ENCODE measurements at regions of chr4 and their contacts with region 1.

Region 1: DNA sequence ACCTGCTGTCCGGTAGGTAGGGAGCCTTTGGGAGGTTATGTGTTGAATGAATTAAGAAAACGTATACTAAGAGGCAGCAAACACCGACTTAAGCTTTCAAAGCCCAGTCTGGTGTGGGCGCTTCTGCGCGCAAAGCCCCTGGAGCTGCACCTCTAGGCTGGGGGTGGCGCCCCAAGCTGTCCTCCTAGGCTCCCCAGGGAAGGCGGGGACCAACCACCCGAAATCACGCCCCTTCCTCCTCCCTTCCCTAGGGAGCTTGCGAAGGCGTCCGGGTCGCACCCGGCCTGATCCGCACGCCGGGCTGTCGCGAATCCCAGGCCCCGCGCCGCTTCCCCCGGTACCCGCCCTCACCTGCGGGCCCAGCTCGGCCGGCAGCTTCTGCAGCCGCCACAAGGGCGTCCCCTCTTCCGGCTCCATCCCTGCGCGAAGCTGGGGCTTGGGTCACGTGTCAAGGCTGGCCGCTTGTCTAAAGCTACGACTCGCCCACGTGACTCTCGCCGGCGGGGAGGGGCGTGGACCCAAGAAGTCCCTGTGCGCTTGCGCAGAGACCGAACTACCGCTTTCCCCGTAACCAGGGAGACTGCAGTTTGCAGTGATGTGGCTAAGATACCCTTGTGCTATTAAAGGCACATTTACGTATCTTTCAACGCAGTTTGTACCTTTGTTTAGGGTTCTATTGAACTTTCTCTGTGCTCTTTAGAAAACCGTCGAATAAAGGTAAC is at the start of gene COMMD8:
- DNase-seq: peak; percentile 98
- H3K4me3 Mint-ChIP-seq: peak within 1 kb of the TSS; percentile 80
- H3K27ac Mint-ChIP-seq: peak within 1 kb of the TSS; percentile 69
- H3K4me1 Mint-ChIP-seq: peaks cover 29% of the 10 kb centered on the region
- H3K27me3 Mint-ChIP-seq: no peaks in the 10 kb centered on the region
- total RNA-seq, gene COMMD8: 24.9 to 26.3 TPM

Region 2: GRCh38 chr4:47289805-47290204 is 173.6 kb before region 1 on chr4:
- CTCF ChIA-PET with region 1: no interaction called
- POLR2A ChIA-PET with region 1: no interaction called
- DNase-seq: no peak
- H3K4me3 Mint-ChIP-seq: no peak overlapping the region
- H3K27ac Mint-ChIP-seq: no peak overlapping the region
- H3K4me1 Mint-ChIP-seq: no peaks in the 10 kb centered on the region
- H3K27me3 Mint-ChIP-seq: no peaks in the 10 kb centered on the region

Region 3: DNA sequence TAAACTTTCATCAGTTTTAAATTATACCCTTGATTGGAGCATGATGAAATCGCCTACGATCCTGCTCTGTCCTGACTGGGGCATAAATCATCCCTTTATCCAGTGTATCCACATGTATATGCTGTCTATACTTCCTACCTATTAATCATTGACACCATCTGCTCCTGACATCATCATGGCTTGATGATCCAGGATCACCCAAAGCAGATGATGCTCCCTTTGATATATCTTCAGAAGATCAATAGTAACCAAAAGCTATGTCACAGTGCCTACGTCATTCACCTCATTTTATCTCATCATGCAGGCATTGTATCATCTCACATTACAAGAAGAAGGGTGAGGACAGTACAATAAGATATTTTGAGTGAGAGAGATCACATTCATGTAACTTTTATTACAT is 137.4 kb before region 1 on chr4:
- CTCF ChIA-PET with region 1: no interaction called
- POLR2A ChIA-PET with region 1: no interaction called
- DNase-seq: no peak
- H3K4me3 Mint-ChIP-seq: no peak overlapping the region
- H3K27ac Mint-ChIP-seq: no peak overlapping the region
- H3K4me1 Mint-ChIP-seq: no peaks in the 10 kb centered on the region
- H3K27me3 Mint-ChIP-seq: peaks cover 3% of the 10 kb centered on the region

Region 4: GRCh38 chr4:47485047-47485692 is 21.8 kb after region 1 on chr4 and contains the start of gene ATP10D:
- CTCF ChIA-PET with region 1: interaction called, 13 read pairs
- POLR2A ChIA-PET with region 1: interaction called, 23 read pairs
- DNase-seq: peak; percentile 81
- H3K4me3 Mint-ChIP-seq: peak within 1 kb of the TSS; percentile 86
- H3K27ac Mint-ChIP-seq: peak within 1 kb of the TSS; percentile 61
- H3K4me1 Mint-ChIP-seq: peaks cover 29% of the 10 kb centered on the region
- H3K27me3 Mint-ChIP-seq: peaks cover 1% of the 10 kb centered on the region
- total RNA-seq, gene ATP10D: 7.4 to 8.1 TPM

Region 5: DNA sequence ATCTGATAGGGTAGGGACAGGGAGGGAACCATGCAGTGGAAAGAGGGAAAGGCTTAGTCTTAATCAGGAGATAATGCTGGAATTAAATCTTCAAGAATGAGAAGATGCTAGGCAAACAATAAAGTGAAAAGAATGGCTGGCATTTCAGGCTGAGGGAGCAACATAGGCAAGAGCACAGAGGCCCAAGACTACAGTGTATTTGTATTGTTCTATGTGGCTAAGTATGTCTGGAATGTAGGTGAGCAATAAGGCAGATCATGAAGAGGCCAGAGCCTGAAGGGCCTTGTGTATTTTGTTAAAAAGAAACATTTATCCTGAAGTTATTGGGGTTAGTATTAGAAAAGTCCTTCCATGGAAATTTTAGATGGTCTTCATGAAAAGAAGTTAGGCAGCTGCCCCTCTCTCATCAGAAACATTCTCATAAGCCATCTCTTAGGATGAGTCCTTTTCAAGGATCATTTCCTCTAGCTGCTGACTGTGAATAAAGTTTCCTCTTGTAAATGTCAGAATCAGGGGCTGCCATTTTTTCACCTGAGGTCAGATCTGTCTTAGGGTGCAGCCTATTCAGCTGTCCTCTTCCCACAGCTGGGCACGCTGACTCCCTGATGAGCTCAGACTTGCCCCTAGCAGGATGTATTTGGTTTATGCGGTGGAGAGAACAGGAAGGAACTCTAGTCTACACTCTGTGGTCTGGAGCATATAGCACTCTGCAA is 68.0 kb after region 1 on chr4:
- CTCF ChIA-PET with region 1: interaction called, 6 read pairs
- POLR2A ChIA-PET with region 1: interaction called, 12 read pairs
- DNase-seq: peak; percentile 80
- H3K4me3 Mint-ChIP-seq: no peak overlapping the region
- H3K27ac Mint-ChIP-seq: peak overlapping the region; percentile 83
- H3K4me1 Mint-ChIP-seq: peaks cover 62% of the 10 kb centered on the region
- H3K27me3 Mint-ChIP-seq: no peaks in the 10 kb centered on the region

Region 6: DNA sequence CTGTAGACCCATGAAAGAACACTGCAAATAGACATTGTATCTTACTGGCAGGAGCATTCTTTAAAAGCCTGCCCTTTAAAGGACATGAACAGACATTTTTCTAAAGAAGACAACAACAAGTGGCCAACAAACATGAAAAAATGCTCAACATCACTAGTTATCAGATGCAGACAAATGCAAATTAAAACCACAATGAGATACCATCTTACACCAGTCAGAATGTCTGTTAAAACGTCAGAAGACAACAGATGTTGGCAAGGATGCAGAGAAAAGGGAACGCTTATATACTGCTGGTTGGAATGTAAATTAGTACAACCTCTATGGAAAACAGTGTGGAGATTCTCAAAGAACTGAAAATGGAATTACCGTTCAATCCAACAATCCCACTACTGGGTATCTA is 98.9 kb after region 1 on chr4:
- CTCF ChIA-PET with region 1: interaction called, 29 read pairs
- POLR2A ChIA-PET with region 1: no interaction called
- DNase-seq: no peak
- H3K4me3 Mint-ChIP-seq: no peak overlapping the region
- H3K27ac Mint-ChIP-seq: no peak overlapping the region
- H3K4me1 Mint-ChIP-seq: peaks cover 10% of the 10 kb centered on the region
- H3K27me3 Mint-ChIP-seq: no peaks in the 10 kb centered on the region

Measured in activated CD4-positive, alpha-beta memory T cell treated with anti-CD3 and anti-CD28 coated beads, Interleukin-2, amount 10 ng/mL, durations not matched to agents 7 days and 5 days (primary cell).